ENCODE measurements at regions of chr13 and their contacts with region 1.

Region 1: GRCh38 chr13:109509154-109509898 is 277.1 kb downstream of the IRS2 start:
- DNase-seq: no peak
- H3K4me3 ChIP-seq: no peak overlapping the region
- H3K27ac ChIP-seq: no peak overlapping the region
- H3K4me1 ChIP-seq: no peaks in the 10 kb centered on the region
- H3K27me3 ChIP-seq: no peaks in the 10 kb centered on the region
- CTCF ChIP-seq: no peak
- POLR2A ChIP-seq: no peak

Region 2: GRCh38 chr13:108377646-108378206 is 1131.6 kb before region 1 on chr13:
- CTCF ChIA-PET with region 1: no interaction called
- POLR2A ChIA-PET with region 1: no interaction called
- dilution Hi-C with region 1: no loop called
- intact Hi-C with region 1: no loop called
- DNase-seq: no peak
- H3K4me3 ChIP-seq: no peak overlapping the region
- H3K27ac ChIP-seq: no peak overlapping the region
- H3K4me1 ChIP-seq: no peaks in the 10 kb centered on the region
- H3K27me3 ChIP-seq: no peaks in the 10 kb centered on the region
- CTCF ChIP-seq: no peak
- POLR2A ChIP-seq: no peak

Region 3: DNA sequence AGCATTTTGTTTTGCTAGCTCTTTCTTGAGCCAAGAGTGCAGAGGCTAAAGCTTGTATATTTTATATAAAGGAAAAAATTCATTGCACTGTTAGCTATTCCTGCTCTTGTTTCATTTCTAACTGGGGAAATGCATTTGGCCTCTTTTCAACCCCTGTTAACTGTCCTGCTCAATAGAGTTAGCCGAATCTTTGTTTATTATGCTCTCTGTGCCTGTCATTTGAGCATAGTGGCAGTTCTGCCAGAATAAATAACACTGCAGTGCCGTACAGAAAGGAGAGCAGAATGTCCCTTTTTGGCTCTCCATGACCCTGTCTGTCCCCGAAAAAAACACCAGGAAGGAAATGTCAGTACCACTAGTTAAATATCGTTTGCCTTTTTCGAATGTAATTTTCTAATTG is 529.1 kb before region 1 on chr13:
- CTCF ChIA-PET with region 1: no interaction called
- POLR2A ChIA-PET with region 1: no interaction called
- dilution Hi-C with region 1: no loop called
- intact Hi-C with region 1: no loop called
- DNase-seq: no peak
- H3K4me3 ChIP-seq: no peak overlapping the region
- H3K27ac ChIP-seq: no peak overlapping the region
- H3K4me1 ChIP-seq: no peaks in the 10 kb centered on the region
- H3K27me3 ChIP-seq: peaks cover 4 to 16% of the 10 kb centered on the region in 2 experiments
- CTCF ChIP-seq: no peak
- POLR2A ChIP-seq: no peak

Region 4: GRCh38 chr13:109361562-109362289 is 147.6 kb before region 1 on chr13:
- CTCF ChIA-PET with region 1: no interaction called
- POLR2A ChIA-PET with region 1: no interaction called
- dilution Hi-C with region 1: no loop called
- intact Hi-C with region 1: no loop called
- DNase-seq: no peak
- H3K4me3 ChIP-seq: no peak overlapping the region
- H3K27ac ChIP-seq: no peak overlapping the region
- H3K4me1 ChIP-seq: no peaks in the 10 kb centered on the region
- H3K27me3 ChIP-seq: no peaks in the 10 kb centered on the region
- CTCF ChIP-seq: no peak
- POLR2A ChIP-seq: no peak

Region 5: DNA sequence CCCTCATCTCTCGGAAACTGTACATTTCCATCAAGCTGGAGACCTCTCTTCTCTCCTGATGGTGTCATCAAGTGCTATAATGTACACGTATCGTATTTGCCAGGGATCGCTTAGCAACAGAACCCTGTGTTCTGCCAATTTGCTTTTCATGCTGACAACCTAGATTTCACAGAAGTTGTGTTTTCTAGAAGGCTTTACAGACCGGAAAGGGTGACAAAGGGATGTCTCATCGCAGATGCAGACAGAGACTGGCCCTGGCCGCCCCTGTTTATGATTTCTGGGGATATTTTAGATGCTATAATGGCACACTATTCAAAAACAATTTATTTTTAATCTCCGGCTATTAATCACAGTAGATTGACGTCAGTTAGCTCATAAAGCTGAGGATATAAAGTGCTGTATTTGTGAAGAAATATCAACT is 14.4 kb before region 1 on chr13:
- CTCF ChIA-PET with region 1: no interaction called
- POLR2A ChIA-PET with region 1: no interaction called
- dilution Hi-C with region 1: no loop called
- intact Hi-C with region 1: loop called (anchors 2 kb)
- DNase-seq: no peak
- H3K4me3 ChIP-seq: no peak overlapping the region
- H3K27ac ChIP-seq: no peak overlapping the region
- H3K4me1 ChIP-seq: no peaks in the 10 kb centered on the region
- H3K27me3 ChIP-seq: no peaks in the 10 kb centered on the region
- CTCF ChIP-seq: no peak
- POLR2A ChIP-seq: no peak

Measured in endothelial cell of umbilical vein (primary cell).